ENCODE measurements at regions of chr6 and their contacts with region 1.

Region 1: GRCh38 chr6:89080542-89081422 is at the start of gene PNRC1:
- DNase-seq: peak; percentile 100
- ATAC-seq: peak; percentile 76
- H3K4me3 Mint-ChIP-seq: peak within 1 kb of the TSS; percentile 93
- H3K27ac Mint-ChIP-seq: peak within 1 kb of the TSS; percentile 99
- H3K4me1 Mint-ChIP-seq: peaks cover 25% of the 10 kb centered on the region
- H3K27me3 Mint-ChIP-seq: no peaks in the 10 kb centered on the region
- total RNA-seq, gene PNRC1: 89.2 to 90.8 TPM

Region 2: GRCh38 chr6:88963139-88964090 is 117.4 kb before region 1 on chr6 and contains the start of gene RNGTT:
- CTCF ChIA-PET with region 1: no interaction called
- POLR2A ChIA-PET with region 1: interaction called, 28 read pairs
- DNase-seq: peak; percentile 98
- ATAC-seq: peak; percentile 100
- H3K4me3 Mint-ChIP-seq: peak within 1 kb of the TSS; percentile 99
- H3K27ac Mint-ChIP-seq: peak within 1 kb of the TSS; percentile 95
- H3K4me1 Mint-ChIP-seq: peaks cover 33% of the 10 kb centered on the region
- H3K27me3 Mint-ChIP-seq: no peaks in the 10 kb centered on the region
- total RNA-seq, gene RNGTT: 20.4 to 23.5 TPM

Region 3: GRCh38 chr6:89050155-89050554 is 30.6 kb before region 1 on chr6:
- CTCF ChIA-PET with region 1: interaction called, 6 read pairs
- POLR2A ChIA-PET with region 1: interaction called, 50 read pairs
- DNase-seq: no peak
- ATAC-seq: peak; percentile 15
- H3K4me3 Mint-ChIP-seq: no peak overlapping the region
- H3K27ac Mint-ChIP-seq: no peak overlapping the region
- H3K4me1 Mint-ChIP-seq: peaks cover 26% of the 10 kb centered on the region
- H3K27me3 Mint-ChIP-seq: peaks cover 3% of the 10 kb centered on the region

Region 4: DNA sequence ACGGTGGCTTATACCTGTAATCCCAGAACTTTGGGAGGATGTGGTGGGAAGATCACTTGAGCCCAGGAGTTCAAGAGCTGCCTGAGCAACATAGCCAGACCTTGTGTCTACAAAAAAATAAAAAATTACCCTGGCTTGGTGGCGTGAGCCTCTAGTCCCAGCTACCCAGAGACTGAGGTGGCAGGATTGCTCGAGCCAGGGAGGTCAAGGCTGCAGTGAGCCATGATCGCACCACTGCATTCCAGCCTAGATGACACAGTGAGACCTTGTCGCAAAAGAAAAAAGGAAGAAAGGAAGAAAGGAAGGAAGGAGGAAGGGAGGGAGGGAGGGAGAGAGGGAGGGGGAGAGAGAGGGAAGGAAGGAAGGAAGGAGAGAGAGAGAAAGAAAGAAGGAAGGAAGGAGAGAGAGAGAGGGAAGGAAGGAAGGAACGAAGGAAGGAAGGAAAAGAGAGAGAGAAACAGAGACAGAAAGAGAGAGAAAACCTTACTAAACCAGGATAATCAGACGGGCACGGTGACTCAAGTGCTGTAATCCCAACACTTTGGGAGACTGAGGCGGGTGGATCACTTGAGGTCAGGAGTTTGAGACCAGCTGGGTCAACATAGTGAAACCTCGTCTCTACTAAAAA is 11.1 kb before region 1 on chr6:
- CTCF ChIA-PET with region 1: no interaction called
- POLR2A ChIA-PET with region 1: interaction called, 16 read pairs
- DNase-seq: no peak
- ATAC-seq: no peak
- H3K4me3 Mint-ChIP-seq: no peak overlapping the region
- H3K27ac Mint-ChIP-seq: no peak overlapping the region
- H3K4me1 Mint-ChIP-seq: no peaks in the 10 kb centered on the region
- H3K27me3 Mint-ChIP-seq: no peaks in the 10 kb centered on the region

Region 5: DNA sequence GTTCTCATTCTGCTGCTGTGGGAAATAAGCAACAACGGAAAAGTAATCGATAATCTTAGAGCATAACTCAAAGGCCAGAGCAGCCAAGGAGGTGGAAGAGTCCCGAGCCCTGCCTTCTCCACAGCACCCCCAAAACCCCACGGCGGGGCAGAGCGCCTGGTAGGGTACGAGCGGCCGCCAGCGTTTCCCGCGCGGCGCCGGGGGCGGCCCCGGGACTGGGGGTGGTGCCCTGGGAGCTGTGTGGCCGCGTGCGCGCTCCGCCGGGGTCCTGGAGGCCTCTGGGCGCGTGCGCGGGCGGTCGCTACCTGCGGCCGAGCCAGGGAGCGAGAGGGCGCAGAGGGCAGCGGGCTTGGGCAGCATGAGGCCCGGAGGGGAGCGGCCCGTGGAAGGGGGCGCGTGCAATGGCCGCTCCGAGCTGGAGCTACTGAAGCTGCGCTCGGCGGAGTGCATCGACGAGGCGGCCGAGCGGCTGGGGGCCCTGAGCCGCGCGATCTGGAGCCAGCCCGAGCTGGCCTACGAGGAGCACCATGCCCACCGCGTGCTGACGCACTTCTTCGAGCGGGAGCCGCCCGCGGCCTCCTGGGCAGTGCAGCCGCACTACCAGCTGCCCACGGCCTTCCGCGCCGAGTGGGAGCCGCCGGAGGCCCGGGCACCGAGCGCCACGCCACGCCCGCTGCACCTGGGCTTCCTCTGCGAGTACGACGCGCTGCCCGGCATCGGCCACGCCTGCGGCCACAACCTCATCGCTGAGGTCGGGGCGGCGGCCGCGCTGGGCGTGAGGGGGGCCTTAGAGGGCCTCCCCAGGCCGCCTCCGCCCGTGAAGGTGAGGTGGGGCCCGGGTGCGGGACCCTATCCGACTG is 65.2 kb after region 1 on chr6 and contains the start of gene PM20D2:
- CTCF ChIA-PET with region 1: interaction called, 6 read pairs
- POLR2A ChIA-PET with region 1: interaction called, 115 read pairs
- DNase-seq: peak; percentile 78
- ATAC-seq: peak; percentile 87
- H3K4me3 Mint-ChIP-seq: peak within 1 kb of the TSS; percentile 88
- H3K27ac Mint-ChIP-seq: peak within 1 kb of the TSS; percentile 96
- H3K4me1 Mint-ChIP-seq: peaks cover 38% of the 10 kb centered on the region
- H3K27me3 Mint-ChIP-seq: no peaks in the 10 kb centered on the region
- total RNA-seq, gene PM20D2: 22.5 to 24.5 TPM

Region 6: GRCh38 chr6:89180971-89181370 is 100.2 kb after region 1 on chr6:
- CTCF ChIA-PET with region 1: no interaction called
- POLR2A ChIA-PET with region 1: no interaction called
- DNase-seq: no peak
- ATAC-seq: no peak
- H3K4me3 Mint-ChIP-seq: no peak overlapping the region
- H3K27ac Mint-ChIP-seq: no peak overlapping the region
- H3K4me1 Mint-ChIP-seq: no peaks in the 10 kb centered on the region
- H3K27me3 Mint-ChIP-seq: peaks cover 40% of the 10 kb centered on the region

Region 7: GRCh38 chr6:89352278-89353117 is 271.7 kb after region 1 on chr6 and contains the start of gene UBE2J1:
- CTCF ChIA-PET with region 1: interaction called, 7 read pairs
- POLR2A ChIA-PET with region 1: interaction called, 35 read pairs
- DNase-seq: peak; percentile 77
- ATAC-seq: peak; percentile 88
- H3K4me3 Mint-ChIP-seq: peak within 1 kb of the TSS; percentile 98
- H3K27ac Mint-ChIP-seq: peak within 1 kb of the TSS; percentile 91
- H3K4me1 Mint-ChIP-seq: peaks cover 77% of the 10 kb centered on the region
- H3K27me3 Mint-ChIP-seq: no peaks in the 10 kb centered on the region
- total RNA-seq, gene UBE2J1: 30.1 to 30.3 TPM

Region 8: DNA sequence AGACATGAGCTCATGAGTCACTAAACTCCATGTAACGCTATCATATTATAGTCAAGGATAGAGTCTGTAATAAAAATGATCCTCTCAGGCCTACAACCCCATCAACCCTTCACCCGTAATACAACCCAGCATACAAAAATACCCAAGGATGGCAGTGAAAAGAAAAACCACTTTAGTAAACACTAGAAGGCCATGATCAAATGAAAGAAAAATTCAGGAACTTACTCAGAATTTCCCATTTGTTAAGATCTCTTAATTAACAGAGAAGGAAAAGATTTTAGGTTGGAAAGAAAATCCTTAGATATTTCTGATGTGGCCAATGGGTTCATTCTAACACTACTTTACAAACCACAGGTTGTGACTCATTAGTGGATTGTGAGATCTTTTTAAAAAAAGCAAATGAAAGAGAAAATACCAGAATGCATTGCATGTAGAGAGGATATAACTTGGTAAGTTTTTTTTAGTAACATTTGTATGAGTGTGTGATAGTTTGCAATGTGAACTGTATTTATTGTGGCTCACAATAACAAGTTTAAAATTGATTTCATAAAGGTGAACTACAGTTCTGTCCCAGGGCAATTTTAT is 279.7 kb after region 1 on chr6:
- CTCF ChIA-PET with region 1: interaction called, 3 read pairs
- POLR2A ChIA-PET with region 1: interaction called, 21 read pairs
- DNase-seq: no peak
- ATAC-seq: peak; percentile 62
- H3K4me3 Mint-ChIP-seq: peak overlapping the region; percentile 0
- H3K27ac Mint-ChIP-seq: peak overlapping the region; percentile 24
- H3K4me1 Mint-ChIP-seq: peaks cover 69% of the 10 kb centered on the region
- H3K27me3 Mint-ChIP-seq: no peaks in the 10 kb centered on the region

Measured in activated CD8-positive, alpha-beta T cell treated with anti-CD3 and anti-CD28 coated beads, Interleukin-2, amount 10 ng/mL, durations not matched to agents 7 days and 5 days (primary cell).